Natural killer cell (primary cell): ENCODE measurements at regions of chr20 and their contacts with region 1.

Region 1: DNA sequence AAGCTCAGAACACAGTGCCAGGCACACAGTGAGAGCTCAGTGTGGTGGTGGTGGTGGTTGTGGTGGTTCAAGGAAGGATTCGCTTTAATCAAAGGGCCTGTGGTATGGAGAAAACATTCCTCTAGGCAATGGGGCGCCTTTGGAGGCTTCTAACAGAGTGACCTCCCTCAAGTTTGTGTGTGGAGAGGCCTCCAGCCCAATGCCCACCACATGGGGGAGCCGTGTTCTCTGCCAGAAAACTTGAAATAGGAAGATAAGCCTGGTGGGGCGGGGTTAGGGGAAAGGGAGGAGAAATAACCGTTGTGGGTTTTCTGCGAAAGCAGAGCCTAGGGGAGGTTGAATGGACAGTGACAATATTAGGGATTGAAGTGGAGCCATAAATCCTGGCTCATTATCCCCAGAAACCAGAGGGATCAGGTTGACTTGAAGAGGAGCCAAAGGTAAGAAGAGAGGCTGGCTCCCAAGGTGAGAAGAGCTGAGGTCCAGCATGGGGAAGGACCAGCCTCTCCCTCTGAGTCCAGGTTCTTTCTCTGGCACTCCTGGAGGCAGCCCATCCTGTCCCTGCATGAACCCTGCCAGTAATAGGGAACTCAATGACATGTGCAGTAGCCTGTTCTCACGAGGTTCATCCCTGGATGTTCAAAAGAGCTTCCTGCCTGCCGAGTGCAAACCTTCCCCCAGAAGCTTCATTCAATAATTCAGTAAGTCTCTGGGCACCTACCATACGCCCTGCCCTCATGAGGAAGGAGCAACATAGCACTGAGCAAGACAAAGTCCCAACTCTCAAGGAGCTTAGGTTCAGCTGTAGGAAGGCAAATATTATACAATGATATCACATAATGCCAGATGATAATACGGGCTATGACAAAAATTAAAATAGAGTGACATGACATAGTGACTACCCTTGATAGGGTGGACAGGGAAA is 51.4 kb downstream of the TGM2 start:
- DNase-seq: no peak
- ATAC-seq: no peak
- H3K4me3 ChIP-seq: no peak overlapping the region
- H3K4me3 Mint-ChIP-seq: no peak overlapping the region
- H3K27ac ChIP-seq: no peak overlapping the region
- H3K27ac Mint-ChIP-seq: peak overlapping the region in 1 of 2 donors; percentile 12
- H3K4me1 ChIP-seq: no peaks in the 10 kb centered on the region
- H3K4me1 Mint-ChIP-seq: no peaks in the 10 kb centered on the region
- H3K27me3 ChIP-seq: no peaks in the 10 kb centered on the region
- H3K27me3 Mint-ChIP-seq: no peaks in the 10 kb centered on the region
- CTCF ChIP-seq: no peak

Region 2: GRCh38 chr20:37796121-37796520 is 317.5 kb before region 1 on chr20:
- intact Hi-C with region 1: no loop called
- DNase-seq: no peak
- ATAC-seq: no peak
- H3K4me3 ChIP-seq: no peak overlapping the region
- H3K4me3 Mint-ChIP-seq: no peak overlapping the region
- H3K27ac ChIP-seq: no peak overlapping the region
- H3K27ac Mint-ChIP-seq: no peak overlapping the region
- H3K4me1 ChIP-seq: no peaks in the 10 kb centered on the region
- H3K4me1 Mint-ChIP-seq: peaks cover 0 to 5% of the 10 kb centered on the region in 2 donors
- H3K27me3 ChIP-seq: no peaks in the 10 kb centered on the region
- H3K27me3 Mint-ChIP-seq: no peaks in the 10 kb centered on the region
- CTCF ChIP-seq: no peak

Region 3: GRCh38 chr20:37990571-37991151 is 123.0 kb before region 1 on chr20:
- intact Hi-C with region 1: no loop called
- DNase-seq: peak; percentile 61 to 77
- ATAC-seq: peak; percentile 85 to 96 (median 91)
- H3K4me3 ChIP-seq: no peak overlapping the region
- H3K4me3 Mint-ChIP-seq: peak overlapping the region; percentile 77
- H3K27ac ChIP-seq: peak overlapping the region; percentile 90
- H3K27ac Mint-ChIP-seq: peak overlapping the region; percentile 92 to 98
- H3K4me1 ChIP-seq: peaks cover 32% of the 10 kb centered on the region
- H3K4me1 Mint-ChIP-seq: peaks cover 26 to 31% of the 10 kb centered on the region in 2 donors
- H3K27me3 ChIP-seq: no peaks in the 10 kb centered on the region
- H3K27me3 Mint-ChIP-seq: no peaks in the 10 kb centered on the region
- CTCF ChIP-seq: no peak

Region 4: DNA sequence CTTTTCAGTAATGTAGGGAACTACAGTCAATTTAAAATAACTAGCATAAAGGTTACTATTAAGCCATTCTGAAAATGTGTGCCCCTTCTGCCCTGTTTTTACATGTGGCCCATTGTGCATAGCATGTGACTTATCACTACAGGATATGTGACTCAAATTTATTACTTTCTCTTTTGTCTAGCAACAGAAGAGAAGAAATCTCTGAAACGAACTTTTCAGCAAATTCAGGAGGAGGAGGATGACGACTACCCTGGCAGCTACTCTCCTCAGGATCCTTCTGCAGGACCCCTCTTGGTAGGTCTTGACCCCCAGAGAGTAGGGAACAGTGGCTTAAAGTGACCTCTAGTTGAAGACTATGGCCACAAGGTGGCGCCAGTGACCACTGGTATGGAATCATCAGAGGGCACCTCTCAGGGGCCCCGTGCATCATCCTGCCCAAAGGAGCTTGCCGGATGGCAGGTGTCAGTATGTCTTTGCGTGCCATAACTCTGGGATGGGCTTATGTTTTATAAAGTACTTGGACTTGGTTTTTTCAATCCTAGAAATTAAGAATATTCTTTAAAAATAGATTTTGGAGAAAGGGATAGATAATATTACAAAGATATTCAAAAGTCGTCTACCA is 56.2 kb before region 1 on chr20:
- intact Hi-C with region 1: loop called (anchors 5 kb)
- DNase-seq: peak; percentile 80 to 87
- ATAC-seq: peak; percentile 88 to 94 (median 89)
- H3K4me3 ChIP-seq: no peak overlapping the region
- H3K4me3 Mint-ChIP-seq: no peak overlapping the region
- H3K27ac ChIP-seq: no peak overlapping the region
- H3K27ac Mint-ChIP-seq: peak overlapping the region; percentile 34 to 63
- H3K4me1 ChIP-seq: no peaks in the 10 kb centered on the region
- H3K4me1 Mint-ChIP-seq: peaks cover 15 to 17% of the 10 kb centered on the region in 2 donors
- H3K27me3 ChIP-seq: no peaks in the 10 kb centered on the region
- H3K27me3 Mint-ChIP-seq: no peaks in the 10 kb centered on the region
- CTCF ChIP-seq: peak; percentile 96

Region 5: GRCh38 chr20:38073307-38074071 is 40.2 kb before region 1 on chr20:
- intact Hi-C with region 1: loop called (anchors 2 kb)
- DNase-seq: peak in 1 of 2 donors; percentile 64
- ATAC-seq: peak; percentile 76 to 83 (median 81)
- H3K4me3 ChIP-seq: no peak overlapping the region
- H3K4me3 Mint-ChIP-seq: no peak overlapping the region
- H3K27ac ChIP-seq: no peak overlapping the region
- H3K27ac Mint-ChIP-seq: peak overlapping the region; percentile 35 to 44
- H3K4me1 ChIP-seq: peaks cover 3% of the 10 kb centered on the region
- H3K4me1 Mint-ChIP-seq: peaks cover 21 to 25% of the 10 kb centered on the region in 2 donors
- H3K27me3 ChIP-seq: no peaks in the 10 kb centered on the region
- H3K27me3 Mint-ChIP-seq: no peaks in the 10 kb centered on the region
- CTCF ChIP-seq: peak; percentile 74

Region 6: DNA sequence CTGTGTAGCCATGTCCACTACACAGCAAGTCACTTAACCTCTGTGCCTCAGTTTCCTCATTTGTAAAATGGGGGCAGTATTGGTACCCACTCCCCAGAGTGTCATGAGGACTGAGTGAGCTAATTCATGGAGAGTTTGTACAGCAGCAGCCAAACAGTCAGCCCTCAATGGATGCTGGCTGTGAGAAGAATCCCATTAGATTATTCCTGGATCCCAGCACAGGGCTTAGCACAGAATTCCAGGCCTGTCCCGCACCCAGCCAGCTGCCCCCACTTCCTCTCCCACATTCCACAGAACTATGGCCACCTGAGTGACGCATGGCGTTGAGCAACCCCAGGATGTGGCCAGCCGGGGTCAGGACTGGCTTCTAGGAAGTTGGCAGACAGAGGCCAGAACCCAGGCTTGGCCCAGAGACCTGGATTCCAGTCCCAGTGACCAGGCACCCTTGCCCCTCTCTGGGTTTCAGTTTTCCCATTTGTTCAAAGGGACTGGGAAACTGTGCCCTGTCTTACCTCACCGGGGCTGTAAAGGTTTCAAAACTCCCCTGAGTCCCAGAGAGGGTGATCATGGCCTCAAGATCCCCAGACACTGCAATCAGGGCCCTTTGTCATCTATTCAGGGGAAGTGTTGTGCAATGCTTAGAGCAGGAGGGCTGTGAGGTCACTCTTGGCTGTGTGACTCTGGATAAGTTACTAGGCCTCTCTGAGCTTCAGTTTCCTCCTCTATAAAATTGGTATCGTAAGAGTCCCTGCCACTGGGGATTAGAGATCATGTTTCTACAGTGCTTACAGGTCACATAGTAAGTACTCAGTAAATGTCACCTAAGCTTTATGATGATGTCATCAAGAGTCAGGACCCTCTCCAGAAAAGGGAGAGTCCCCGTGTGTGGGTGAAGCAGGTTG is 54.4 kb after region 1 on chr20:
- intact Hi-C with region 1: no loop called
- DNase-seq: no peak
- ATAC-seq: peak in 1 of 3 donors; percentile 38
- H3K4me3 ChIP-seq: no peak overlapping the region
- H3K4me3 Mint-ChIP-seq: no peak overlapping the region
- H3K27ac ChIP-seq: peak overlapping the region; percentile 13
- H3K27ac Mint-ChIP-seq: peak overlapping the region in 1 of 2 donors; percentile 33
- H3K4me1 ChIP-seq: peaks cover 18% of the 10 kb centered on the region
- H3K4me1 Mint-ChIP-seq: peaks cover 12 to 14% of the 10 kb centered on the region in 2 donors
- H3K27me3 ChIP-seq: peaks cover 2% of the 10 kb centered on the region
- H3K27me3 Mint-ChIP-seq: peaks cover 6 to 10% of the 10 kb centered on the region in 2 donors
- CTCF ChIP-seq: no peak